Tibial artery (tissue), 4 donors: ENCODE measurements at regions of chr9 and their contacts with region 1.

Region 1: GRCh38 chr9:70602321-70603019 is 188.0 kb upstream of the KLF9 start:
- DNase-seq: peak; percentile 61 to 77
- H3K4me3 ChIP-seq: no peak overlapping the region
- H3K27ac ChIP-seq: peak overlapping the region; percentile 93 to 95
- H3K4me1 ChIP-seq: peaks cover 0 to 31% (median 23%) of the 10 kb centered on the region in 4 donors
- H3K27me3 ChIP-seq: no peaks in the 10 kb centered on the region
- CTCF ChIP-seq: peak; percentile 80 to 89

Region 2: DNA sequence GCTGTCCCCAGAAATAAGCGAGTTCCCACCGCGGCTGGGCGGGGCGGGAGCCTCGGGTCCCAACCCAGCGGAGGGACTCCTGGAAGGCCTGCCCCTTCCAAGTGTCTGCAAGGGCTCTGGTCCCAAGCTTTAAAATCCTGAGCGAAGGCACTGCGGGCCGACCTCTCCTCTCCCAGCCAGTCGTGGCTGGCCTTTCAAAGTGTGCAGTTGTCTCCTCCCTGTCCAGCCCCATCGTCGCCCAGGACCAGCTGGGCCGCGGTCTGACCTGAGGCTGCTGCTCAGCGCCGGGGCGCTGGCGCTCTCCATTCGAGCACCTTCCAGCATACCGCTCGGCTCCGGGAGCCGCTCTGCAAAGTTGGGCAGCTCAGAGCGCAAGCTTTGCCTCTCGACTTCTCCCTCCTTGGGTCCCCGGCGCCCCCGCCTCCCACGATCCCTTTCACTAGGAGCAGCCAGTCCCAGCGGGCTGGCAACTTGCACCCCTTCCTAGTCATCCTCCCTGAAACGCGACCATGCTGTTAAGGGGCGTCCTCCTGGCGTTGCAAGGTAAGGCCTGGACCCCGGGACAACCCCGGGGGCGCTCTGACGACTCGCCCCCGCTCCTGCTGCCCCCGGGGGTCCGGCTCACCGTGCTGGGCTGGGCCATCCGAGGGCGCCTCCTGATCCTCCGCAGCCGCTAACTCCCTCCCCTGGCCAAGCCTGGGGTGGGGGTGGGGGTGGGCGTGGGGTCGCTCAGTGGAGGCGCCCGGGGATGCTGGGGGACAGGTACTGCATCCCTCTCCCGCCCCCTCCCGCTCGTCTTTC is 558.6 kb before region 1 on chr9 and contains the start of gene MAMDC2:
- intact Hi-C with region 1: loop called (anchors 10 kb)
- DNase-seq: peak; percentile 77 to 84
- H3K4me3 ChIP-seq: peak within 1 kb of the TSS; percentile 77 to 82
- H3K27ac ChIP-seq: peak within 1 kb of the TSS; percentile 86 to 89
- H3K4me1 ChIP-seq: peaks cover 0 to 58% (median 41%) of the 10 kb centered on the region in 4 donors
- H3K27me3 ChIP-seq: no peaks in the 10 kb centered on the region
- CTCF ChIP-seq: no peak

Region 3: GRCh38 chr9:70120834-70121510 is 481.5 kb before region 1 on chr9:
- intact Hi-C with region 1: loop called (anchors 5 kb)
- DNase-seq: peak; percentile 85 to 92
- H3K4me3 ChIP-seq: no peak overlapping the region
- H3K27ac ChIP-seq: peak overlapping the region; percentile 31 to 59
- H3K4me1 ChIP-seq: peaks cover 0 to 42% (median 10%) of the 10 kb centered on the region in 4 donors
- H3K27me3 ChIP-seq: no peaks in the 10 kb centered on the region
- CTCF ChIP-seq: peak in 1 of 2 experiments; percentile 24

Region 4: DNA sequence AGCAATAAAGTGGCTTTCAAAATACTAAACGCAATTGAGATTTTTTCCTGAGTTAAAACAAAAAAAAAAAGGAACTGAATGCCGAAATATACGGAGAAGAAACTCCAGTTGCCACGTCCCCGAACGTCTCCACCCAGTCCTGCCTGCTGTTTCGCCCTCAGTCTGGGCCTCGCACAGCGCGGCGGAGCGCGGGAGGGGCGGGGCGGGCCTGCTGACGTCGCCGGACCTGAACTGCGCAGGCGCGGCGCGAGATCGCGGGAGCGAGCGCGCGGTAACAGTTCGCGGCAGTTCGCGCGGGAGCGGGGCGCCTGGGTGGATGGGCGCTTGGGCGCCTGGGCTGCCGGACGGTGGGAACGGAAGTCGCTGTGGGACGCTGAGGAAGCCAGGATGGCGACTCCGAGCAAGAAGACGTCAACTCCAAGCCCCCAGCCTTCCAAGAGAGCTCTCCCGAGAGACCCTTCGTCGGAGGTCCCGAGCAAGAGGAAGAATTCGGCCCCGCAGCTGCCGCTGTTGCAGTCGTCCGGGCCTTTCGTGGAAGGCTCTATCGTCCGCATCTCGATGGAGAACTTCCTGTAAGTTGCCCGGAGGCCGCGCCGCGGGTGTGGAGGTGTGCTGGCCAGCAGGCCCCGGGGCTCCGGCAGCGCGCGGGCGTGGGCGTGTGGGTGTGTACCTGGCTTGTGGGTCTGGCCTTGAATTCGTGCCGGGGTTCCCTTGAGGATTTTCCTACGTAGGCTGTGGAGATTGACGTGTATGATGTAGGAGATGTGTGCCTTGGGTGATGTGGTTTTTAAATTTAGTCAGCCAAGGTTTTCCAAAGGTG is 343.6 kb before region 1 on chr9 and contains the start of gene SMC5:
- intact Hi-C with region 1: loop called (anchors 10 kb)
- DNase-seq: peak; percentile 86 to 95
- H3K4me3 ChIP-seq: peak within 1 kb of the TSS; percentile 65 to 80
- H3K27ac ChIP-seq: peak within 1 kb of the TSS; percentile 93 to 96
- H3K4me1 ChIP-seq: peaks cover 0 to 69% (median 42%) of the 10 kb centered on the region in 4 donors
- H3K27me3 ChIP-seq: no peaks in the 10 kb centered on the region
- CTCF ChIP-seq: no peak

Region 5: DNA sequence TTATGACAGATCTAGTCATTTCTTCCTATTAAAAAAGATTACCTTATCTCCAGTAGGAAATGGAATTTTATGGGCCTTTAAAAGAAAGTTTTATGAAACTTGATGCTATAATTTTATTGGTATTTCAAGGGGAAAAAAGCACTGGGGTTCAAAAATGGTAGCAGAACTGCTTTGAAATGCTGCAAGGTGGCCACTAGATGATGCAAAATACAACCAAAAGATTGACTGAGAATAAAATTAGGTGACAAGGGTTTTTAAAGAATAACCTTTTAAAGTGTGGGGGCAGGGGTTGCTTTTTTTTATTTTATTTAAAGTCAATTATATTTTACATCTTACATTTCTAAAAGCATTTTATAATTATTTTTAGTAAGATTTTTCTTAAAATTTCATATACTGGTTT is 249.7 kb before region 1 on chr9:
- intact Hi-C with region 1: loop called (anchors 5 kb)
- DNase-seq: no peak
- H3K4me3 ChIP-seq: no peak overlapping the region
- H3K27ac ChIP-seq: peak overlapping the region in 1 of 2 donors; percentile 4
- H3K4me1 ChIP-seq: peaks cover 0 to 21% (median 0%) of the 10 kb centered on the region in 4 donors
- H3K27me3 ChIP-seq: no peaks in the 10 kb centered on the region
- CTCF ChIP-seq: peak; percentile 67 to 69

Region 6: GRCh38 chr9:70413798-70414775 is 188.4 kb before region 1 on chr9 and contains the start of gene KLF9:
- intact Hi-C with region 1: loop called (anchors 2 kb)
- DNase-seq: peak; percentile 98 to 99
- H3K4me3 ChIP-seq: peak within 1 kb of the TSS; percentile 94 to 97
- H3K27ac ChIP-seq: peak within 1 kb of the TSS; percentile 100
- H3K4me1 ChIP-seq: peaks cover 0 to 52% (median 28%) of the 10 kb centered on the region in 4 donors
- H3K27me3 ChIP-seq: peaks cover 0 to under 1% of the 10 kb centered on the region in 2 donors
- CTCF ChIP-seq: peak in 1 of 2 experiments; percentile 5

Region 7: GRCh38 chr9:70438341-70438928 is 164.0 kb before region 1 on chr9:
- intact Hi-C with region 1: no loop called
- DNase-seq: peak; percentile 80 to 85
- H3K4me3 ChIP-seq: no peak overlapping the region
- H3K27ac ChIP-seq: peak overlapping the region; percentile 9 to 46
- H3K4me1 ChIP-seq: peaks cover 0 to 59% (median 15%) of the 10 kb centered on the region in 4 donors
- H3K27me3 ChIP-seq: no peaks in the 10 kb centered on the region
- CTCF ChIP-seq: no peak

Region 8: DNA sequence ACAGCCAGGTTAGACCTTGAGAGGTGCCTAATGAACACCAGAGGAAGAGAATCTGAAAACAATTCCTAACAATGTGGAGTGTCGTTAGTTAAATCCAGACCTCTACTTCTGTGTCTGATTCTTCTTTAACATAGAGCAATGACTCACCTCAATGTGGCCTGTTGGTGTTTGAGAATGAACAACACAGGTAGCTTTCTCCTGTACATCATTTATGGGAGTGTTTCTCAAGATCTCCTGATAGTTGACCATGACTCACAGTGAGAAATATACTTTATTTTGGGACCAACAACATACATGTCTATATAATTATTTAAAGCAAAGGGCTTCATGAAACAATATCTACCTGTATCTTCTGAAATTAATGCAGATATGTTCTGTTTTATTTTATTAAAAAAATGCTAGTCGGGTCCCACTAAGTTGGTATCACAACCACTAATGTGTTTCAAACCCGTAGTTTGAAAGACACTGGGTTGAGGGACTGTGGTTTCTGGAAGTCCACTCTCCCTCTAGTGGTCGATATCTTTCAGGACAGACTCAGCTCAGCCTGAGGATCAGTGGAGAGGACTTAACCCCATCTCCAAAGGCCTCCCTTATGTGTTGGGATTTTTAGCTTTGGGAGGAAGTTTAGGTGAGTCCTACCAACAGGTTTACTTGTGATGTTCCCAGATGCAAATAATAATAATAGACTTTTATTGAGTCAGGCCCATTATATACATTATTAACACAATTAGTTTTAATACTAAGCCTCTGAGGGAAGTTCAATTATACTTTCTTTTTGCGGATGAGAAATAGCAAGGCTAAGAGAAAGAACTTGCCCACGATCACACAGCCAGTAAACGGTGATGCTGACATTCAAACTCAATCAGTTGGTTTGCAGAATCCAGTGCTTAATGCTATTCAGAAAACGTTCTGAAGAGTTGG is 118.0 kb before region 1 on chr9:
- intact Hi-C with region 1: loop called (anchors 5 kb)
- DNase-seq: no peak
- H3K4me3 ChIP-seq: no peak overlapping the region
- H3K27ac ChIP-seq: peak overlapping the region; percentile 81 to 93
- H3K4me1 ChIP-seq: peaks cover 8 to 88% (median 54%) of the 10 kb centered on the region in 4 donors
- H3K27me3 ChIP-seq: no peaks in the 10 kb centered on the region
- CTCF ChIP-seq: peak; percentile 72 to 74

Region 9: GRCh38 chr9:70701163-70701562 is 98.7 kb after region 1 on chr9:
- intact Hi-C with region 1: no loop called
- DNase-seq: no peak
- H3K4me3 ChIP-seq: no peak overlapping the region
- H3K27ac ChIP-seq: no peak overlapping the region
- H3K4me1 ChIP-seq: no peaks in the 10 kb centered on the region
- H3K27me3 ChIP-seq: no peaks in the 10 kb centered on the region
- CTCF ChIP-seq: no peak